ENCODE measurements at regions of chr11 and their contacts with region 1.

Region 1: GRCh38 chr11:9265211-9266131 is at the start of gene DENND5A:
- DNase-seq: no peak
- ATAC-seq: peak; percentile 63
- H3K4me3 ChIP-seq: peak within 1 kb of the TSS; percentile 83
- H3K27ac ChIP-seq: peak within 1 kb of the TSS; percentile 56
- H3K4me1 ChIP-seq: peaks cover 4% of the 10 kb centered on the region
- H3K27me3 ChIP-seq: 0 out of 4 replicates have a peak, but pooled peaks cover 0 to 4% of the 10 kb centered on the region in 2 experiments
- CTCF ChIP-seq: no peak; a peak in 1 of 6 replicates
- EP300 ChIP-seq: no peak
- POLR2A ChIP-seq: peak; percentile 81
- RAD21 ChIP-seq: peak; percentile 23; the same call in 1 of the 2 replicates
- polyA plus RNA-seq, gene DENND5A: 15.6 to 24.1 TPM

Region 2: GRCh38 chr11:9170450-9170849 is 95.0 kb before region 1 on chr11:
- CTCF ChIA-PET with region 1: interaction called, 12 read pairs
- POLR2A ChIA-PET with region 1: no interaction called
- RAD21 ChIA-PET with region 1: interaction called, 7 read pairs
- SMC1A ChIA-PET with region 1: interaction called, 20 read pairs
- in situ Hi-C with region 1: no loop called
- intact Hi-C with region 1: loop called (anchors 5 kb)
- DNase-seq: no peak
- ATAC-seq: no peak
- H3K4me3 ChIP-seq: no peak overlapping the region
- H3K27ac ChIP-seq: no peak overlapping the region
- H3K4me1 ChIP-seq: no peaks in the 10 kb centered on the region
- H3K27me3 ChIP-seq: no peaks in the 10 kb centered on the region
- CTCF ChIP-seq: no peak
- EP300 ChIP-seq: no peak
- POLR2A ChIP-seq: no peak
- RAD21 ChIP-seq: no peak

Region 3: GRCh38 chr11:9250139-9250582 is 15.3 kb before region 1 on chr11:
- CTCF ChIA-PET with region 1: interaction called, 8 read pairs
- POLR2A ChIA-PET with region 1: interaction called, 7 read pairs
- RAD21 ChIA-PET with region 1: interaction called, 5 read pairs
- SMC1A ChIA-PET with region 1: interaction called, 17 read pairs
- in situ Hi-C with region 1: no loop called
- intact Hi-C with region 1: no loop called
- DNase-seq: peak; percentile 77
- ATAC-seq: peak; percentile 83
- H3K4me3 ChIP-seq: no peak overlapping the region
- H3K27ac ChIP-seq: peak overlapping the region; percentile 35; the same call in 1 of the 2 replicates
- H3K4me1 ChIP-seq: peaks cover 30% of the 10 kb centered on the region
- H3K27me3 ChIP-seq: no peaks in the 10 kb centered on the region
- CTCF ChIP-seq: no peak
- EP300 ChIP-seq: peak; percentile 42 to 58; a peak in 2 of 4 replicates
- POLR2A ChIP-seq: no peak
- RAD21 ChIP-seq: no peak

Region 4: GRCh38 chr11:9396752-9397151 is 131.3 kb after region 1 on chr11:
- CTCF ChIA-PET with region 1: interaction called, 3 read pairs
- POLR2A ChIA-PET with region 1: no interaction called
- RAD21 ChIA-PET with region 1: no interaction called
- SMC1A ChIA-PET with region 1: interaction called, 3 read pairs
- in situ Hi-C with region 1: no loop called
- intact Hi-C with region 1: loop called (anchors 5 kb)
- DNase-seq: peak; percentile 60
- ATAC-seq: peak; percentile 60
- H3K4me3 ChIP-seq: peak overlapping the region; percentile 35; the same call in 1 of the 2 replicates
- H3K27ac ChIP-seq: peak overlapping the region; percentile 49
- H3K4me1 ChIP-seq: peaks cover 10% of the 10 kb centered on the region
- H3K27me3 ChIP-seq: no peaks in the 10 kb centered on the region
- CTCF ChIP-seq: no peak
- EP300 ChIP-seq: no peak
- POLR2A ChIP-seq: no peak
- RAD21 ChIP-seq: no peak